Adrenal gland (tissue), 19 donors: ENCODE measurements at regions of chr5 and their contacts with region 1.

Region 1: DNA sequence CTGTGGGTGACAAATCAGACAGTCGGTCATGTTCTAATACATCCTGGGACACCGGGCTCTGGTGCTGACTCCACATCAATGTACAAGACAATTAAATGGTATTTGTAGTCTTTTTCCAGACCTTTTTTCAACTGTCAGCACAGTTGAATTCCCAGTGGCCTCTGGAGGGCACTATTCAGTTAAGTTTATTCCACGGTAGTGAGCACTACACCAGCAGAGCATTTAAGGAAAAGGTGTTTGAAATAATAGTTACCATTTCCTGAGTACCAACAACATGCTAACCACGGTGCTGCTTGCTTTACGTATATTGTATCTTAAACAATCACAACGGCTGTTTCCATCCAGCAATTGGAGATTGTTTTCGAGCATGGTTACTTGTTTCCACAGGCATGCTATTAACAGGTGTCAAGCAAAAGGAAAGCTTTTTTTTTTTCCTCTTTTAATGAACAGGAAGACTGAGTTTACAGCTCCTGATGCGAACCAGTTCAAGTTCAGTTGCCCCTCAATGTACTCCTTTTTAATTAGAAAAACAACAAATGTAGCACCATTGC is 186.7 kb downstream of the PDZD2 start:
- DNase-seq: peak; percentile 26 to 75 (median 42)
- H3K4me3 ChIP-seq: no peak overlapping the region
- H3K27ac ChIP-seq: no peak overlapping the region
- H3K4me1 ChIP-seq: no peaks in the 10 kb centered on the region
- H3K27me3 ChIP-seq: no peaks in the 10 kb centered on the region
- CTCF ChIP-seq: peak; percentile 35 to 71 (median 66)
- POLR2A ChIP-seq: no peak

Region 2: GRCh38 chr5:31408814-31409213 is 416.8 kb before region 1 on chr5:
- intact Hi-C with region 1: no loop called
- DNase-seq: no peak
- H3K4me3 ChIP-seq: no peak overlapping the region
- H3K27ac ChIP-seq: no peak overlapping the region
- H3K4me1 ChIP-seq: peaks cover 10 to 19% of the 10 kb centered on the region in 2 donors
- H3K27me3 ChIP-seq: no peaks in the 10 kb centered on the region
- CTCF ChIP-seq: no peak
- POLR2A ChIP-seq: no peak

Region 3: DNA sequence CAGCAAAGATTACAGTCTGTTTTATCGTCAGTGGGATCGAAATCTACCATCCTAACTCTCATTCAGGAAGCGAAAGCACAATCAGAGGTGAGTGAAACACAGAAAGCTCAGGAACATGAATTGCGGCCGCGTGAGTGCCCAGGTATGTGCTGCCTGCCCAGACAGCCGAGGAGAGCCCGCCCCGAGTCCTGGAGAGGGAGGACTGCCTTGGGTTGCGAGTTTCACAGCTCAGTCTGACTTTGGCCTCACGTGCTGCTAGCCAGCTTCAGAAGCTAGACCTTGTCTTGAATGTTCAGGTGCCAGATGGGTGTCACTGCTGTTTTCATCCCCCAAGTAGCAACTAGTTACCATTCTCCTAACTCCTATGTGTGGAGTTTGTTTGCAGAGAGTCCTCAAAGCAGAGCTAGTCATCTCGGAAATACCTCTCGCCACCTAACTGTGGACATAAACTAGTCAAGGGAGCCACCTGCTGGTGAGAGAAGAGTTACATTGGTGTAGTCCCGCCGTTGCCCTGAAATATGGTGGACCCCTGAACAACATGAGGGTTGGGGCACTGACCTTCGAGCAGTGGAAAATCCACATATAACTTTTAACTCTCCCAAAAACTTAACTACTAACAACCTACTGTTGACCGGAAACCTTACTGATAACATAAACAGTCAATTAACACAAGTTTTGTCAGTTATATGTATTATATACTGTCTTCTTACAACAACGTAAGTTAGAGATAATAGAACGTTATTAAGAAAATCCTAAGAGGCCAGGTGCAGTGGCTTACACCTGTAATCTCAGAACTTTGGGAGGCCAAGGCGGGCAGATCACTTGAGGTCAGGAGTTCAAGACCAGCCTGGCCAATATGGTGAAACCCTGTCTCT is 267.6 kb after region 1 on chr5:
- intact Hi-C with region 1: loop called in 1 of 2 experiments (anchors 5 kb)
- DNase-seq: peak; percentile 61 to 82 (median 78)
- H3K4me3 ChIP-seq: no peak overlapping the region
- H3K27ac ChIP-seq: no peak overlapping the region
- H3K4me1 ChIP-seq: peaks cover 0 to 5% of the 10 kb centered on the region in 2 donors
- H3K27me3 ChIP-seq: no peaks in the 10 kb centered on the region
- CTCF ChIP-seq: peak; percentile 58 to 86 (median 74)
- POLR2A ChIP-seq: no peak